Calu3 (cell line): ENCODE measurements at regions of chr17 and their contacts with region 1.

Region 1: GRCh38 chr17:44968226-44969143 is at the start of gene C1QL1:
- DNase-seq: peak; percentile 98
- H3K4me3 Mint-ChIP-seq: peak within 1 kb of the TSS; percentile 62
- H3K27ac Mint-ChIP-seq: no peak within 1 kb of the TSS
- H3K4me1 Mint-ChIP-seq: no peaks in the 10 kb centered on the region
- H3K27me3 Mint-ChIP-seq: peaks cover 77% of the 10 kb centered on the region
- CTCF ChIP-seq: peak; percentile 21
- total RNA-seq, gene C1QL1: 1.3 and 1.5 TPM in 2 replicates

Region 2: DNA sequence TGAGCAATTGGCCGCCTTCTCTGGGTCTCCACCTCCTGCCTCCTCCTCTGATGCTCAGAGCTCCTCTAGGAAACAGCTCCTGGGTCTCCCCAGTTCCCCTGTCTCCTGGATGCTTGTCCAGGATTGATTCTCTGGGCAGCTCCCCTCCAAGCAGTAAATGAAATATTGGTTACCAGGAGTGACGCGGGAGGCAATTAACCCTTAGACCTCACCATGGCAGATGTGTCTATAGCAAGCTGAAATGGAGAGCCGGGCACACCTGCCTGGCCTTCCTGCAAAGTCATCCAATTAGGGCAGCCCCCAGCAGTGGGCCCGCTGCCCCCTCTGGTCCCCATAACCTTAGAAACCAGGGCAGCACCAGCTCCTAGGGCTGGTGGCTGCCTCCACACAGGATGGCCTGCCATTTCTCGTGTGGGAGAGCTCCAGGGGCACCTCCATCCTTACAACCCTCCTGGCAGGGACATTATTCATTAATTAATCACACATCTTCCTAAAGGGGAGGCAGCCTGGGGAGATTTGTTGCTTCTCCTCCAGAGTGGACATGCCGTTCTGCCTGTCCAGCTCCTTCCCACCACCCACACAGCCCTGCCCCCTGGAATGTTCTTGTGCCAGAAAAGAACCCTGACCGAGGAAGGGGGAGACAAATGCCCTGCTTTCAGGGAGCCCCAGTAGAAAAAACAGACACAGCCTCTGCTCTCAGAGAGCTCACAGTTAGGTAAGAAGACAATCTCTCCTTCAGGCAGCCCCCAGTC is 12.6 kb before region 1 on chr17:
- CTCF ChIA-PET with region 1: interaction called, 14 read pairs
- intact Hi-C with region 1: no loop called
- DNase-seq: no peak
- H3K4me3 Mint-ChIP-seq: no peak overlapping the region
- H3K27ac Mint-ChIP-seq: no peak overlapping the region
- H3K4me1 Mint-ChIP-seq: peaks cover 6% of the 10 kb centered on the region
- H3K27me3 Mint-ChIP-seq: peaks cover 40% of the 10 kb centered on the region
- CTCF ChIP-seq: no peak

Region 3: GRCh38 chr17:44981221-44981968 is 12.9 kb after region 1 on chr17:
- CTCF ChIA-PET with region 1: interaction called, 11 read pairs
- intact Hi-C with region 1: no loop called
- DNase-seq: peak; percentile 62
- H3K4me3 Mint-ChIP-seq: peak overlapping the region; percentile 51
- H3K27ac Mint-ChIP-seq: peak overlapping the region; percentile 37
- H3K4me1 Mint-ChIP-seq: peaks cover 32% of the 10 kb centered on the region
- H3K27me3 Mint-ChIP-seq: peaks cover 62% of the 10 kb centered on the region
- CTCF ChIP-seq: no peak

Region 4: GRCh38 chr17:45021607-45022287 is 53.3 kb after region 1 on chr17:
- CTCF ChIA-PET with region 1: interaction called, 4 read pairs
- intact Hi-C with region 1: loop called (anchors 2 kb)
- DNase-seq: peak; percentile 91
- H3K4me3 Mint-ChIP-seq: peak overlapping the region; percentile 64
- H3K27ac Mint-ChIP-seq: peak overlapping the region; percentile 53
- H3K4me1 Mint-ChIP-seq: peaks cover 17% of the 10 kb centered on the region
- H3K27me3 Mint-ChIP-seq: peaks cover 41% of the 10 kb centered on the region
- CTCF ChIP-seq: peak; percentile 98